Activated CD4-positive, alpha-beta T cell treated with anti-CD3 and anti-CD28 coated beads for 36 hours (primary cell): ENCODE measurements at regions of chr7 and their contacts with region 1.

Region 1: GRCh38 chr7:92447345-92448204 is at the start of gene GATAD1:
- DNase-seq: peak; percentile 91
- ATAC-seq: peak; percentile 89
- H3K4me3 Mint-ChIP-seq: peak within 1 kb of the TSS; percentile 86
- H3K27ac Mint-ChIP-seq: peak within 1 kb of the TSS; percentile 84
- H3K4me1 Mint-ChIP-seq: peaks cover 15% of the 10 kb centered on the region
- H3K27me3 Mint-ChIP-seq: no peaks in the 10 kb centered on the region
- total RNA-seq, gene GATAD1: 18.4 to 19.0 TPM

Region 2: GRCh38 chr7:91264046-91264923 is 1183.3 kb before region 1 on chr7 and contains the start of gene FZD1:
- CTCF ChIA-PET with region 1: no interaction called
- POLR2A ChIA-PET with region 1: no interaction called
- intact Hi-C with region 1: loop called in 1 of 2 experiments (anchors 10 kb)
- DNase-seq: peak; percentile 89
- ATAC-seq: peak; percentile 90
- H3K4me3 Mint-ChIP-seq: peak within 1 kb of the TSS; percentile 76
- H3K27ac Mint-ChIP-seq: peak within 1 kb of the TSS; percentile 65
- H3K4me1 Mint-ChIP-seq: peaks cover 8% of the 10 kb centered on the region
- H3K27me3 Mint-ChIP-seq: peaks cover 41% of the 10 kb centered on the region
- total RNA-seq, gene FZD1: 0.47 to 0.69 TPM

Region 3: GRCh38 chr7:91940572-91941341 is 506.8 kb before region 1 on chr7 and contains the start of gene AKAP9:
- CTCF ChIA-PET with region 1: interaction called, 3 read pairs
- POLR2A ChIA-PET with region 1: no interaction called
- intact Hi-C with region 1: loop called in 1 of 2 experiments (anchors 1 kb)
- DNase-seq: peak; percentile 94
- ATAC-seq: peak; percentile 91
- H3K4me3 Mint-ChIP-seq: peak within 1 kb of the TSS; percentile 87
- H3K27ac Mint-ChIP-seq: peak within 1 kb of the TSS; percentile 94
- H3K4me1 Mint-ChIP-seq: peaks cover 29% of the 10 kb centered on the region
- H3K27me3 Mint-ChIP-seq: no peaks in the 10 kb centered on the region
- total RNA-seq, gene AKAP9: 25.3 to 25.4 TPM

Region 4: GRCh38 chr7:92178927-92179924 is 268.3 kb before region 1 on chr7 and contains the start of gene LRRD1:
- CTCF ChIA-PET with region 1: interaction called, 10 read pairs
- POLR2A ChIA-PET with region 1: no interaction called
- intact Hi-C with region 1: loop called (anchors 1 kb)
- DNase-seq: peak; percentile 95
- ATAC-seq: peak; percentile 100
- H3K4me3 Mint-ChIP-seq: peak within 1 kb of the TSS; percentile 72
- H3K27ac Mint-ChIP-seq: peak within 1 kb of the TSS; percentile 47
- H3K4me1 Mint-ChIP-seq: peaks cover 7% of the 10 kb centered on the region
- H3K27me3 Mint-ChIP-seq: peaks cover 5% of the 10 kb centered on the region
- total RNA-seq, gene LRRD1: not detected

Region 5: GRCh38 chr7:92461027-92462003 is 13.7 kb after region 1 on chr7:
- CTCF ChIA-PET with region 1: interaction called, 24 read pairs
- POLR2A ChIA-PET with region 1: no interaction called
- intact Hi-C with region 1: no loop called
- DNase-seq: peak; percentile 56
- ATAC-seq: peak; percentile 74
- H3K4me3 Mint-ChIP-seq: no peak overlapping the region
- H3K27ac Mint-ChIP-seq: no peak overlapping the region
- H3K4me1 Mint-ChIP-seq: no peaks in the 10 kb centered on the region
- H3K27me3 Mint-ChIP-seq: no peaks in the 10 kb centered on the region

Region 6: DNA sequence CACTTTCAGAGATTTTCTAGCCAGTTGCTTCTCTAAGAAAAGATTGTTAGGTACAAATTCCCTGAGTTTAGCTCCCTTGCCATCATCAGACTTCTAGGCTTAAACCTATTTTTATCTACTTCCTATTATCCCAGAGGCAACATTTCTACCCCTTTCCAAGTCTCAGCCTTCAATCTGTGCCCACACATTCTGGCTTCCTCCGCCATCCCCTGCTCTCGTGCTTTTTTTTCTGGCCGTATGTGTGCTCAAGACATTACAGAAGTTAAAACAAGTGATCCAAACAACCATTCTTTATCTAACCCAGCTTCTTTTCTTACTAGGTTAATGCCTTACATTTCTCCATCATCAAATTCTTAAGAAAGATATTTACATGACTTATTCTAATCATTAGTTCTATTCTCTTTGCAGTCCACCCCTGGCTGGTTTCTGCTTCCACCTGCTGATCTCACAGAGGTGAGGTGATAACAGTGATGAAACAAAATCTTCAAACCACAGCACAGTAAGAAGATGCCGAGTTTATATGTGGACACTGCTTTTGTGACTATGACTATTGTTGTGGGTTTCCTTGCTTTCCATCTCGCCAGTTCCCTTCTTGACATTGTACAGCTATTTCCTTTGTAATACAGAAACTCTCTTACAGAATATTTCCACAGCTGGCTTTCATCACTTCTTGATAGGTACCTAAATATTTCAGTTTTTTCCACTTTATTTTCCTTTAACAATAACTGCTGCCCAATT is 407.1 kb after region 1 on chr7:
- CTCF ChIA-PET with region 1: no interaction called
- POLR2A ChIA-PET with region 1: no interaction called
- intact Hi-C with region 1: no loop called
- DNase-seq: peak; percentile 47
- ATAC-seq: peak; percentile 91
- H3K4me3 Mint-ChIP-seq: no peak overlapping the region
- H3K27ac Mint-ChIP-seq: peak overlapping the region; percentile 69
- H3K4me1 Mint-ChIP-seq: peaks cover 16% of the 10 kb centered on the region
- H3K27me3 Mint-ChIP-seq: peaks cover 6% of the 10 kb centered on the region